T-cell (primary cell): ENCODE measurements at regions of chr7 and their contacts with region 1.

Region 1: GRCh38 chr7:143901668-143902331 is at the start of gene TCAF1:
- DNase-seq: peak; percentile 70 to 92 (median 84)
- ATAC-seq: peak; percentile 95 to 96 (median 96)
- H3K4me3 ChIP-seq: peak within 1 kb of the TSS; percentile 58 to 95
- H3K4me3 Mint-ChIP-seq: peak within 1 kb of the TSS; percentile 82 to 92 (median 89)
- H3K27ac ChIP-seq: peak within 1 kb of the TSS; percentile 68
- H3K27ac Mint-ChIP-seq: peak within 1 kb of the TSS; percentile 85 to 93
- H3K4me1 ChIP-seq: peaks cover 5 to 14% of the 10 kb centered on the region in 2 experiments
- H3K4me1 Mint-ChIP-seq: peaks cover 31 to 36% (median 34%) of the 10 kb centered on the region in 3 donors
- H3K27me3 ChIP-seq: no peaks in the 10 kb centered on the region
- H3K27me3 Mint-ChIP-seq: no peaks in the 10 kb centered on the region
- total RNA-seq, gene TCAF1: 12.9 to 15.0 (median 13.5) TPM

Region 2: GRCh38 chr7:144019467-144019866 is 117.7 kb after region 1 on chr7:
- CTCF ChIA-PET with region 1: no interaction called
- POLR2A ChIA-PET with region 1: no interaction called
- DNase-seq: no peak
- ATAC-seq: no peak
- H3K4me3 ChIP-seq: no peak overlapping the region
- H3K4me3 Mint-ChIP-seq: no peak overlapping the region
- H3K27ac ChIP-seq: no peak overlapping the region
- H3K27ac Mint-ChIP-seq: no peak overlapping the region
- H3K4me1 ChIP-seq: no peaks in the 10 kb centered on the region
- H3K4me1 Mint-ChIP-seq: no peaks in the 10 kb centered on the region
- H3K27me3 ChIP-seq: no peaks in the 10 kb centered on the region
- H3K27me3 Mint-ChIP-seq: peaks cover 0 to 2% of the 10 kb centered on the region in 2 donors

Region 3: DNA sequence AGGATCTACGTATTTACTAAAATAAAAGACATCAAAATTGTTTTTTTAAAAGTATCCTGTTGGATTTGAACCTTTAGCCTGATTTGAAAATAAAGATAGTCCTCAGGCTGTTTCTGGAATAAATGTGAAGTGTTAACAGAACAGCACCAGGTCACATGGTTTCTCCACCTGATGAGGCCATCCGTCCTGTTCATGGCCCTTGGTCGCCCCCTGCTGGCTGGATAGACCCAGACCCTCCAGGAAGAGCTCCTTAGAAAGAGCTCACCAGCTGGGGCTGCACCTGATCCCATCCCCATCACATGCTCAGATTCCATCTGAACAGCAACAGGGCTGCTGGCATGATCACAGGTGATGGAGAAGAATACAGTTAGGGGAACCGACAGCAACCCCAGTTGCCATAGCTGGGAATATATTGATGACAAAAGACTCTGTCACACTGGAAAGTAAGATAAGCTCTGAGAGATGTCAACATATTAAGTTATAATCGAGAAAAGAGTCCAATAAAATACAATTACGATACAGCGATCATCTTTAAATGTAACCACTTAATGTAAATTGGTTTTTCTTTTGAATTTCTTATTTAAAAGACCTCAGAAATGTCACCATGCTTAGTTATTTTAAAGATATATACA is 226.0 kb after region 1 on chr7:
- CTCF ChIA-PET with region 1: interaction called, 4 to 14 read pairs
- POLR2A ChIA-PET with region 1: no interaction called
- DNase-seq: peak; percentile 66 to 89 (median 81)
- ATAC-seq: peak; percentile 89 to 100 (median 94)
- H3K4me3 ChIP-seq: no peak overlapping the region
- H3K4me3 Mint-ChIP-seq: no peak overlapping the region
- H3K27ac ChIP-seq: no peak overlapping the region
- H3K27ac Mint-ChIP-seq: no peak overlapping the region
- H3K4me1 ChIP-seq: no peaks in the 10 kb centered on the region
- H3K4me1 Mint-ChIP-seq: no peaks in the 10 kb centered on the region
- H3K27me3 ChIP-seq: peaks cover 0 to 6% of the 10 kb centered on the region in 2 experiments
- H3K27me3 Mint-ChIP-seq: peaks cover 2 to 11% of the 10 kb centered on the region in 2 donors

Region 4: GRCh38 chr7:145543242-145543641 is 1641.4 kb after region 1 on chr7:
- CTCF ChIA-PET with region 1: no interaction called
- POLR2A ChIA-PET with region 1: interaction called in 1 of 2 experiments, 13 read pairs
- DNase-seq: no peak
- ATAC-seq: no peak
- H3K4me3 ChIP-seq: no peak overlapping the region
- H3K4me3 Mint-ChIP-seq: no peak overlapping the region
- H3K27ac ChIP-seq: no peak overlapping the region
- H3K27ac Mint-ChIP-seq: no peak overlapping the region
- H3K4me1 ChIP-seq: no peaks in the 10 kb centered on the region
- H3K4me1 Mint-ChIP-seq: no peaks in the 10 kb centered on the region
- H3K27me3 ChIP-seq: no peaks in the 10 kb centered on the region
- H3K27me3 Mint-ChIP-seq: no peaks in the 10 kb centered on the region